Activated CD4-positive, alpha-beta T cell treated with anti-CD3 and anti-CD28 coated beads, Interleukin-2, amount 10 ng/mL, durations not matched to agents 24 days and 14 days (primary cell): ENCODE measurements at regions of chr14 and their contacts with region 1.

Region 1: GRCh38 chr14:50116181-50116956 is at the start of gene VCPKMT:
- DNase-seq: peak; percentile 99
- H3K4me3 Mint-ChIP-seq: peak within 1 kb of the TSS; percentile 97
- H3K27ac Mint-ChIP-seq: peak within 1 kb of the TSS; percentile 99
- H3K4me1 Mint-ChIP-seq: peaks cover 20% of the 10 kb centered on the region
- H3K27me3 Mint-ChIP-seq: no peaks in the 10 kb centered on the region
- total RNA-seq, gene VCPKMT: 13.9 and 14.3 TPM in 2 replicates

Region 2: GRCh38 chr14:49598485-49599300 is 517.7 kb before region 1 on chr14 and contains the start of gene LRR1:
- intact Hi-C with region 1: loop called (anchors 1 kb)
- DNase-seq: peak; percentile 97
- H3K4me3 Mint-ChIP-seq: peak within 1 kb of the TSS; percentile 96
- H3K27ac Mint-ChIP-seq: peak within 1 kb of the TSS; percentile 94
- H3K4me1 Mint-ChIP-seq: peaks cover 25% of the 10 kb centered on the region
- H3K27me3 Mint-ChIP-seq: no peaks in the 10 kb centered on the region
- total RNA-seq, gene LRR1: 47.7 and 50.4 TPM in 2 replicates

Region 3: DNA sequence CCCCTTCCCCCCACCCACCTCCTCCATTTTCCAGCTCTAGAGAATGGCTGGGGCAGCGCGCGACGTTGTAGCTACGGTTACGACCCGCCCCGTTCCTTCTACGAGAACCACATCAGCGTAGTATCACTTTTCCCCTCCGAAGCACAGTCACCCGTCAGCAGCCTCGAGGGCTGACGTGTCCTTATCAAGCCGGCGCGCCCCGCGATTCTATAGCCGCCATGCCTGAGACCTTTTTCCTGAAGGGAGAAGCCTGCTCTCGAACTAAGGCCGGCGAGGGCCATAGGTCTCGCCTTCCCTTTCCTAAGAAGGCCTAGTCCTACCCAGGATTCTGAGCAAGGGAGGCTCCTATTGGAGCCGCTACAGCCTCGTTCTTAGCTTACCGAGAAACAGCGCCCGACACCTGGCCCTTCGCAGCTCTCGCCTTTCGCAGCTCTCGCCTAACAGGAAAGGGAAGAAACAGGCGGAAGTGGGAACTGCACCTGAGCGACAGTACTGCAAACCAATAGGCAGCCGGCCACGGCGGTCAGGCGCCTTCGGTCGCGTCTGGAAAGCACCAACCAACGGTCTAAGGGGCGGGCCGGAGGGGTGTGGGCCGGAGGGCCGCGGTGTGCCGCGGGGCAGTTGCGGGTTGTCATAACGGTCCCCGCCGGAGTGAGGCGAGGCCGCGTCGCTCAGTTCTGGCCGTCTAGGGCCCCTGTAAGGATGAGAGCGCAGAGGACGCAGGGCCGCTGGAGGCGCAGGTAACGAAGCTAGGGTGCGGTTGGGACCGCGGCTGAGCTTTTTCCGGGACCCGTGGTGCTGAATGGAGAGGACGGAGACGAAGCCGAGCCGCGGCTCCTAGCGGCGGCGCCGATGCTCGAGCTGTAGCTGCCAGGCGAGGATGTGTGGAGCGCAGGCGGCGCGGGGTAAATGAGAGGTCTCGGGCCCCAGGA is 495.9 kb before region 1 on chr14 and contains the starts of genes MGAT2 and RPL36AL:
- intact Hi-C with region 1: loop called (anchors 5 kb)
- DNase-seq: peak; percentile 99
- H3K4me3 Mint-ChIP-seq: peak within 1 kb of the TSS; percentile 96
- H3K27ac Mint-ChIP-seq: peak within 1 kb of the TSS; percentile 96
- H3K4me1 Mint-ChIP-seq: peaks cover 36% of the 10 kb centered on the region
- H3K27me3 Mint-ChIP-seq: no peaks in the 10 kb centered on the region
- total RNA-seq, gene MGAT2: 45.6 and 48.5 TPM in 2 replicates
- total RNA-seq, gene RPL36AL: 221 and 229 TPM in 2 replicates

Region 4: GRCh38 chr14:49692811-49693734 is 423.3 kb before region 1 on chr14 and contains the start of gene KLHDC1:
- intact Hi-C with region 1: loop called (anchors 10 kb)
- DNase-seq: peak; percentile 95
- H3K4me3 Mint-ChIP-seq: peak within 1 kb of the TSS; percentile 79
- H3K27ac Mint-ChIP-seq: peak within 1 kb of the TSS; percentile 84
- H3K4me1 Mint-ChIP-seq: peaks cover 18% of the 10 kb centered on the region
- H3K27me3 Mint-ChIP-seq: no peaks in the 10 kb centered on the region
- total RNA-seq, gene KLHDC1: 0.95 and 0.96 TPM in 2 replicates

Region 5: DNA sequence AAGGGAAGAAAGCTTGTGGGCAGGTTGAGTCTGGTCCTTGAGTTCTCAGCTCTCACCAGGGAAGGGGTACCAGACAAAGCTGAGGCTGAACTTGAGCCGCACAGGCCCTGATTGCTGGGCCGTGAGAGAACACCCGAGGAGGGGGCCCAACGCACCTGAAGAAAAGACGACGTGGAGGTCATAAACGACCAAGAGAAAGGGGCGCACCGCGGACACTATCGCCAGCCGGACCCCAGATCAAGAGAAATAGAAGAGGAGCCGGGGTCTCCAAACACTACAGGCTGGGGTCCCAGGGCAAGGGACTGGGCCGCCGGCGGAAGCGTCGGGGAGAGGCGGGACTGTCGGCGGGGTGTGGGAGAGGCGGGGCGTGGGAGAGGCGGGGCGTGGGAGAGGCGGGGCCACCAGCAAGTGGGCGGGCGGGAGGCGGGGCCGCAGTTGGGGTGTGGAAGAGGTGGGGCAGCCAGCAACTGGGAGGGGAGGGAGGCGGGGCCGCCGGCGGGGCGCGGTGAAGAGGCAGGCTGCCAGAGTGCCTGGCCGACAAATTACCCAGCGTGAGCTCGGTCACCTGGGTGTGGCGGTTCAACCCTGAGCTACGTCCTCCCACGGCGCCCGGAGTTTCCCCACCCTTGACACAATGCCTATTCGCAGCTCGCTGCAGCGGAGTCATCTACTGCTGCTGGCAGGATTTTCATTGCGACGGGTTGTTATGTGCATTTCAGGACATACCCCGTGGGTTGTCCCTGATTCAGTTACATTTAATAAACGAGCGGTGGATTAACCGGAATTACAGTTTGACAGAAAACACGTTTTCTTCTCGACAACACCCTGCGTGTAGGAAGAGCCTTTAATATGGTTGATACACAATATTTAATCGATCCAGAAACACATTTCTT is 248.3 kb before region 1 on chr14:
- intact Hi-C with region 1: loop called (anchors 1 kb)
- DNase-seq: peak; percentile 98
- H3K4me3 Mint-ChIP-seq: peak overlapping the region; percentile 99
- H3K27ac Mint-ChIP-seq: peak overlapping the region; percentile 97
- H3K4me1 Mint-ChIP-seq: peaks cover 23% of the 10 kb centered on the region
- H3K27me3 Mint-ChIP-seq: no peaks in the 10 kb centered on the region

Region 6: DNA sequence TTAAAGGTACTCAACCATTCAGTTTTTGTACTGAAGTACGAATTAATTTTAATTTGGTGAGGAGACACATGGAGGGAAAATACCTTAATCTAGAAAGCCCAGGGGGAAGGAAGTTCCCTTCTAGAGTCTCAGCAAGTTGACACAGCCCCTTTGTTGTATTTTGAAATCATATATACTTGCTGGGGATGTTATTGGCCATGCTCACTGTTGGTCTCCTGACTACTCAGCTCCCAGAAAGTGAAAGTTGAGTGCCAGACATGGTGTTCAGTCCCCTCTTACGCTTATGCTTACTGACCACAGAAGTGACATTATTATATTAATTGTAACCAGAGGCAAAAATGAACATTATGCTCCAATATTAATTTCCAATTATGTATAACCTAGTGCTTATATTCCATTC is 195.4 kb before region 1 on chr14:
- intact Hi-C with region 1: no loop called
- DNase-seq: no peak
- H3K4me3 Mint-ChIP-seq: no peak overlapping the region
- H3K27ac Mint-ChIP-seq: no peak overlapping the region
- H3K4me1 Mint-ChIP-seq: peaks cover 15% of the 10 kb centered on the region
- H3K27me3 Mint-ChIP-seq: no peaks in the 10 kb centered on the region

Region 7: GRCh38 chr14:50064993-50065392 is 51.4 kb before region 1 on chr14:
- intact Hi-C with region 1: no loop called
- DNase-seq: peak; percentile 92
- H3K4me3 Mint-ChIP-seq: peak overlapping the region; percentile 57
- H3K27ac Mint-ChIP-seq: peak overlapping the region; percentile 91
- H3K4me1 Mint-ChIP-seq: peaks cover 79% of the 10 kb centered on the region
- H3K27me3 Mint-ChIP-seq: no peaks in the 10 kb centered on the region

Region 8: DNA sequence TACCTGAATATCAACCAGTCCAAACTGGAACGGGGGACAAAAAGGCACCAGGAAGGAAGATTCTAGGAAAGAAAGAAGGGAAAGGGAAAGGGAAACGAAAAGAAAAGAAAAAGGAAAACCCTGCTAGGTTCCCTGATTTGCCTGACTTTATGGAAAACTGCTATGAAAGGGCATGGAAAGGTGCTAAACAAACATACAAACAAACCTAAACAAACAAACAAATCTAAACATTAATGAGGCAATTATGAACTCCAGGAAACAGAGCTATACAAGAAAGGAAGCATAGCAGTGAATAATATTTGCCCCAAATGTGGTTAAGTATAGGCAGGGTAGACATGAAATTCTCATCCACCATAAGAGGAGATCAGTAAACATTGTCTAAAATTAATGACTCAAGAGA is 11.9 kb after region 1 on chr14:
- intact Hi-C with region 1: no loop called
- DNase-seq: no peak
- H3K4me3 Mint-ChIP-seq: no peak overlapping the region
- H3K27ac Mint-ChIP-seq: no peak overlapping the region
- H3K4me1 Mint-ChIP-seq: peaks cover 3% of the 10 kb centered on the region
- H3K27me3 Mint-ChIP-seq: no peaks in the 10 kb centered on the region

Region 9: DNA sequence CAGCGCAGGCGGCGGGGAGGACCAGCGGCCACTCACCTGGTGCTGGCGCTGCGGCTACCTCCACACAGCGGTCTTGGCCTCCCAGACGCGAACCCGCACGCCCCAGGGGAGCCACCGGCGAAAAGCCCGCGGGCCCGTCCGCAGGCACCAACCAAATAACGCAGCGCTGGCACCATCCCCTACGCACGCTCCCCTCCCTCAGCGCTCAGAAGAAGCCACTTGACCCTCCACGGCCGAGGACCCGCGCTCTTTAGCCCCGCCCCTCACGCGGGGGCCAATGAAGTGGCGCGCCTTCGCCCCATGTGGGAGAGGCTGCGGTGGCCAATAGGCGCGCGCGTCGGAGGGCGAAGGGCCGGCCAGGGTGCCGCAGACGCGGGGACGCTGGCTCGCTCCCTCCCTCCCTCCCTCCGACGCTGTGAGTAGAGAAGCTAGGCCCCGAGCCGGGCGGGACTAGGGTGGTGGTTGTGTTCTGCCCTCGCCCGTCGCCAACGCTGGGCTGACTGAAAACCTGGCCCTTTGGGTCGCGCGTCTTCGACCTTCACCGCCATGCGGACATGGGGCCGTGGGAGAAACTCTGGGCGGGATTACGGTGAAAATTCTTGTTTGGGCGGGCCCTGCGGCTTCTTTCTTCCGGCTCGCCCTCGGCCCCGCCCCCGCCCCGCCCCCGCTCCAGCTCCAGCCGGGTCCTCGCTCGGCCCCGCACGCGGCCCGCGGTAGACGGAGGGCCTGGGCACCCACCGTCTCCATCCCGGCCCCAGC is 195.8 kb after region 1 on chr14 and contains the starts of genes DMAC2L and L2HGDH:
- intact Hi-C with region 1: loop called (anchors 1 kb)
- DNase-seq: peak; percentile 98
- H3K4me3 Mint-ChIP-seq: peak within 1 kb of the TSS; percentile 96
- H3K27ac Mint-ChIP-seq: peak within 1 kb of the TSS; percentile 99
- H3K4me1 Mint-ChIP-seq: peaks cover 39% of the 10 kb centered on the region
- H3K27me3 Mint-ChIP-seq: no peaks in the 10 kb centered on the region
- total RNA-seq, gene DMAC2L: 16.3 and 18.8 TPM in 2 replicates
- total RNA-seq, gene L2HGDH: 16.8 and 18.0 TPM in 2 replicates

Region 10: DNA sequence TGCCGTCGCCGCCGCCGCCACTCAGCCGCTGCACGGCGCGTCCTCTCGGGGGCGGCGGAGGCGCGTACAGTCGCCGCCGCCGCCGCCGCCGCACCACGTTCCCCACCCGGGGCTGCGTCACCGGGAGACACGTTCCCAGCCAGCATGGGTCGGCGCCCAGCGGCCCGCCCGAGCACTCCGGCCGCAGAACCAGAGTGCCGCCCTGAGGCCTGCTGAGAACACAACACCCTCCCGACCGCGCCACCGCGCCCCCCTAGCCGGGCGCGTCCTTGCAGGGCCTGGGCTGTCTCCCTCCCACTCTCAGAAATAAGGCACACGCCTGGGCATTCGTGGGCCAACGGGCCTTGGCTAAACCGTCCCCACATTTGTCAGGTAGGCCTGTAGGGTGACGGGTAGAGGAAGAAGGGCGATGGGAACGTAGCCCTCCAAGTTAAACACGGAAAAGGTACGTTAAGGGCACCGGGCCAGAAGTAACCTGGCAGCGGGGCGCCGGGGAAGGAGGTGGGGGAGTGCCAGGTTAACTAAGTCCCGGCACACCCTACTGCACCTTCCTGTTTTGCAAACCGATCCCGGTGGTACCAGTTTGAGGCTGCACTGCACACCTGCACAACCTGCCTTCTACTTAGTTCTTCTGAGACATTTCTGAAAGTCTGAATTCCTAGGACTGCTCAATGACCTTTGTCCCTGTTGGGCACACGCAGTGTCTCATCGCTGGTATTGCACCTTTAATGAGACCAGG is 416.3 kb after region 1 on chr14 and contains the start of gene MAP4K5:
- intact Hi-C with region 1: loop called (anchors 5 kb)
- DNase-seq: peak; percentile 96
- H3K4me3 Mint-ChIP-seq: peak within 1 kb of the TSS; percentile 89
- H3K27ac Mint-ChIP-seq: peak within 1 kb of the TSS; percentile 75
- H3K4me1 Mint-ChIP-seq: peaks cover 38% of the 10 kb centered on the region
- H3K27me3 Mint-ChIP-seq: peaks cover 17% of the 10 kb centered on the region
- total RNA-seq, gene MAP4K5: 24.3 and 24.6 TPM in 2 replicates